PC-9 (cell line): ENCODE measurements at regions of chr19 and their contacts with region 1.

Region 1: DNA sequence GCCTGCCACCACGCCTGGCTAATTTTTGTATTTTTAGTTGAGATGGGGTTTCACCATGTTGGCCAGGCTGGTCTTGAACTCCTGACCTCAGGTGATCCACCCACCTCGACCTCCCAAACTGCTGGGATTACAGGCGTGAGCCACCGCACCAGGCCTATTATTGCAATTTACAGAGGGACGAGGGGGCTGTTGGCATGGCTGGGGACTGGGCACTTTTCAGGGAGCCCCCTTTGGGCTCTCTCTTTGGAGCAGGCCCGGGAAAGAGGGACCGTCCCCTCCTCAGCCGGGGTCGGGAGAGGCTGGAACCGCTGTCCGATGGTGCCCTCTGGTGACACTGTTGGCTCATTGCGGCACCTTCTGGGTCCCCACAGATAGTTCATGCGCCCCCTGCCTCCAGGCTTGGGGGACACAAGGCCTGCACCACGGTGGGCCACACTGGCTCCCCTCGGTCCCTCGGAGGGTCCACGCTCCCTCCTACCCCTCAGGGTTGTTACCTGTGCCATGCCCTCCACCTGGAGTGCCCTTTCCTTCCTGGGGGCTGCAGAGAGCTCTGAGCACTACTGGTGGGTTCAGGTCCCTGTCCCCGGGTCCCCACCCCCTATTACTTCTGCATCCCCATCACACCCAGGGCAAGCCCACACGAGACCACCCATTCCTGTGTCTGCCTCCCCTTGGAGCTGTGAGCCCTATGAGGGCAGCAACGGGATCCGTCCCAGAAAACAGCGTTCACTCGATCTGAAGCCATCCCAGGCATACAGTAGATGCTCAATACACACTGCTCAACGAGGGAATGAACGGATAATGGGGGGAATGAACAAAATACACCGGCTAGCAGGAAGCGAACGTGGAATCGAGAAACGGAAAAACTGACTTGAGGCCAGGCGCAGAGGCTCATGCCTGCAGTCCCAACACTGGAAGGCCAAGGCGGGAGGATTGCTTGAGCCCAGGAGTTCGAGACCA is 12.5 kb downstream of the FEM1A start:
- DNase-seq: peak in 1 of 2 experiments; percentile 52
- H3K4me3 ChIP-seq: no peak overlapping the region
- H3K27ac ChIP-seq: no peak overlapping the region
- H3K4me1 ChIP-seq: peaks cover 21% of the 10 kb centered on the region
- H3K27me3 ChIP-seq: no peaks in the 10 kb centered on the region
- CTCF ChIP-seq: peak; percentile 78

Region 2: GRCh38 chr19:4740092-4740491 is 63.9 kb before region 1 on chr19:
- CTCF ChIA-PET with region 1: interaction called, 29 read pairs
- POLR2A ChIA-PET with region 1: no interaction called
- intact Hi-C with region 1: no loop called
- DNase-seq: no peak
- H3K4me3 ChIP-seq: no peak overlapping the region
- H3K27ac ChIP-seq: no peak overlapping the region
- H3K4me1 ChIP-seq: no peaks in the 10 kb centered on the region
- H3K27me3 ChIP-seq: peaks cover 4% of the 10 kb centered on the region; the same call in 1 of the 2 replicates
- CTCF ChIP-seq: no peak

Region 3: GRCh38 chr19:4768934-4769777 is 34.9 kb before region 1 on chr19:
- CTCF ChIA-PET with region 1: interaction called, 13 read pairs
- POLR2A ChIA-PET with region 1: no interaction called
- intact Hi-C with region 1: no loop called
- DNase-seq: peak; percentile 65 to 72
- H3K4me3 ChIP-seq: no peak overlapping the region
- H3K27ac ChIP-seq: no peak overlapping the region
- H3K4me1 ChIP-seq: no peaks in the 10 kb centered on the region
- H3K27me3 ChIP-seq: peaks cover 35% of the 10 kb centered on the region
- CTCF ChIP-seq: no peak

Region 4: DNA sequence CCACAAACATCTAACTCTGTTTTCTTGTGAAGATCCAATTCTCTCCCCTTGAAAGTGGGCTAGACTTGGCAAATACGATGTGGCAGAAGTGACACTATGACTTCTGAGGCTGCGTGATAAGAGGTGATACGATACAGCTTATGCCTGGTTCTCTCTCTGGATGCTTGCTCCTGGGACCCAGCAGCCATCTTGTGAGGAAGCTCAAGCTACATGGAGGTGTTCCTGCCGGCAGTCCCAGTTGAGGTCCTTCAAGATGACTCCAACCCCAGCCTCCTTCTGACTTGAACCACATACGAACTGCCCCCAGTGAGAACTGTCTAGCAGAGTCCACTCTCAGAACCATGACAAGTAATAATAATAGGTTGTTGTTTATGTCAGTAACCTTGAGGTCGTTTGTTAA is 23.2 kb before region 1 on chr19:
- CTCF ChIA-PET with region 1: no interaction called
- POLR2A ChIA-PET with region 1: no interaction called
- intact Hi-C with region 1: no loop called
- DNase-seq: no peak
- H3K4me3 ChIP-seq: no peak overlapping the region
- H3K27ac ChIP-seq: no peak overlapping the region
- H3K4me1 ChIP-seq: no peaks in the 10 kb centered on the region
- H3K27me3 ChIP-seq: peaks cover 50% of the 10 kb centered on the region
- CTCF ChIP-seq: no peak

Region 5: DNA sequence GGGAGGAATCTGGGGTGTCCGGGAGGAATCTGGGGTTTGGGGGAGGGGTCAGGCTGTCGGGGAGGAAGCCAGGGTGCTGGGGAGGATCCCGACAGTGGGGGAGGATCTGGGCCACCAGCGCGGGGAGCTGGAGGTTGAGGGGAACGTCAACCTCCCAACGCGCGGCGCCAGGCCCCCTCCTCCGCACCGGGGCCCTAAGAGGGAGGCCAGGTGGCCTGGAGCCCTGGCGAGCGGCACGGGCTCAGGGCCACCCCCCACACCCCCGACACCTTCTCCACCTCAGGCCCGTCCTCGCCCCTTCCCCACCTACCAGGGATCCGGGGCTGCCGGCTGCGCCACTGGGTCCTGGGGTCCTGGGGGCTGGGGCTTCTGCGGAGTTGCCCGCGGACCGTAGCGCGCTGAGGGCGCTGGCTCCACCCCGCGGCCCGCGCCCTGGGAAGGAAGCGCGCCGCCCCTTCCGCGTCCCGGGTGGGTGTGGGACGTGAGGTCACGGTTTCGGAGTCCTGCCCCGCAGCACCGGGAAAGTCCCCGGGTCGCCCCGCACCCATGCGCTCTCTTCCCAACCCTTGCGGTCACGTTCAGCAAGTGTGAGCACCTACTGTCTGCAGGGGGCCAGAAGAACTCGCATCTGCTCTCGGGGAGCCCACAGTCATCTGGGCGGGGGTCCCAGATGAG is 27.4 kb after region 1 on chr19 and contains the start of gene TICAM1:
- CTCF ChIA-PET with region 1: no interaction called
- POLR2A ChIA-PET with region 1: no interaction called
- intact Hi-C with region 1: no loop called
- DNase-seq: peak; percentile 38 to 43
- H3K4me3 ChIP-seq: peak within 1 kb of the TSS; percentile 81
- H3K27ac ChIP-seq: peak within 1 kb of the TSS; percentile 54
- H3K4me1 ChIP-seq: no peaks in the 10 kb centered on the region
- H3K27me3 ChIP-seq: no peaks in the 10 kb centered on the region
- CTCF ChIP-seq: no peak
- total RNA-seq, gene TICAM1: 9.9 and 12.7 TPM in 2 replicates

Region 6: DNA sequence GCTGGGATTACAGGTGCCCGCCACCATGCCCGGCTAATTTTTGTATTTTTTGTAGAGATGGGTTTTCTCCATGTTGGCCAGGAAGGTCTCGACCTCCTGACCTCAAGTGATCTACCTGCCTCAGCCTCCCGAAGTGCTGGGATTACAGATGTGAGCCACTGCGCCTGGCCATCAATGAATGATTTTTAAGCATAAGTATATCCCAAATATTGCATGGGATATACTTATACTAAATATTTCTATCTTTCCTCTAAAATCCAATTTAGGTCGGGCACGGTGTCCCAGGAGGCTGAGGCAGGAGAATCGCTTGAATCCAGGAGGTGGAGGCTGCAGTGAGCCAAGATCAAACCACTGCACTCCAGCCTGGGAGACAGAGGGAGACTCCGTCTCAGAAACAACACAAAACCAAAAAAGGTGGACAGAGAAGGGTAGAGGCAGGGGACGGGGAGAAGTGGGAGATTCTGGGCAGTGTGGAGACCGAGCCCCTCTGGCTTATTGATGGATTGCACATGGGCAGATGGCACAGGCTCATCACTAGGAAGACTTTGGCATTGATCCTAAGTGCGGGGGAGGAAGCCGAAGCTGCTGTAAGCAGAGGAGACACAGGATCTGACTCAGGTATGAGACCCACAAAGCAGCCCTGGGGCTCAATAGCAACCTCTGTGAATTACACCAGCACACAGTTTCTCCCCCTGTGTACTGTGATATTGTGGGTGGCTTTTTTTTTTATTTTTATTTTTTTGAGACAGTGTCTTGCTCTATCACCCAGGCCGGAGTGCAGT is 85.2 kb after region 1 on chr19:
- CTCF ChIA-PET with region 1: no interaction called
- POLR2A ChIA-PET with region 1: no interaction called
- intact Hi-C with region 1: no loop called
- DNase-seq: peak; percentile 22 to 52
- H3K4me3 ChIP-seq: no peak overlapping the region
- H3K27ac ChIP-seq: no peak overlapping the region
- H3K4me1 ChIP-seq: no peaks in the 10 kb centered on the region
- H3K27me3 ChIP-seq: no peaks in the 10 kb centered on the region
- CTCF ChIP-seq: no peak